ENCODE measurements at regions of chr1 and their contacts with region 1.

Region 1: DNA sequence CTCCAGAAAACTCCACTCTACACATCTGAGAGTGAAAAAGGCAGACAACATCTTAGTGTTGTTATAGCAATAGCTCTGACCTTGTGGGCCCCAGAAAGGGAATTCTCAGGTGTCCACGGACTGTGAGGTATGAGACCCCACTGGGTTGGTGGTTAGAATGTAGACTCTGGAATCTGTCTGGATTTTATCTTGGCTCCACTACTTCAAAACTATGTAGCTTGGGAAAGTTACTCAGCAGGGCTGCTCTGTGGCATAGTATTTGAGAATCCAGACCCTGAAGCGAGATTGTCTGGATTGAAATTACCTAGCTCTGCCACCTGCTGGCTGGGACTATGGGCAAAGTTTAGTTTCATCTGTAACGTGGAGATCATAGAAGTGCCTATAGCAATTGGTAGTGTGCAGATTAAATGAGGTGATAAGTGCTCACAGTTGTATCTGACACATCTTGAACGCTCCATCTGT is 25.8 kb downstream of the PRDM2 start:
- DNase-seq: peak; percentile 59
- H3K4me3 Mint-ChIP-seq: no peak overlapping the region
- H3K27ac Mint-ChIP-seq: no peak overlapping the region
- H3K4me1 Mint-ChIP-seq: peaks cover 35% of the 10 kb centered on the region
- H3K27me3 Mint-ChIP-seq: no peaks in the 10 kb centered on the region

Region 2: DNA sequence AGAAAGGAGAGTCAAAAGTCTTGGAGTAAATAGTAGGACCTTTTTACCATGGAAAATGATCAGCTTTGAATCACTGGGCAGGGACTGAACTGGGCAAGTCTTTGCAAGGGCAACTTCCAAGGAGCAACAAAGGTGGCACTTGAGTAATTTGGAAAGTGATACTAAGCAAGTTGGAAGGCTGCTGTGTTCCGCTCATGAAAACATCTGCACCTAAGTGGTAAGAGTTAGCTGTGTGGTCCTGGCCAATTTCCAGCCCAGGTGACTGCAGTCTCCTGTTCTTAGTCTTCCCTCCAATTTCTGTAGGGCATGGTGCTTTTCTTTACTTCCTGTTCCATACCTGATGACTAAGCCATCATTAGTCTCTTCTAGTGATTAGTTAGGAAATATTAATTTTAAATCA is 61.3 kb before region 1 on chr1:
- CTCF ChIA-PET with region 1: interaction called, 20 read pairs
- POLR2A ChIA-PET with region 1: no interaction called
- DNase-seq: no peak
- H3K4me3 Mint-ChIP-seq: no peak overlapping the region
- H3K27ac Mint-ChIP-seq: no peak overlapping the region
- H3K4me1 Mint-ChIP-seq: peaks cover 2% of the 10 kb centered on the region
- H3K27me3 Mint-ChIP-seq: peaks cover 2% of the 10 kb centered on the region

Region 3: DNA sequence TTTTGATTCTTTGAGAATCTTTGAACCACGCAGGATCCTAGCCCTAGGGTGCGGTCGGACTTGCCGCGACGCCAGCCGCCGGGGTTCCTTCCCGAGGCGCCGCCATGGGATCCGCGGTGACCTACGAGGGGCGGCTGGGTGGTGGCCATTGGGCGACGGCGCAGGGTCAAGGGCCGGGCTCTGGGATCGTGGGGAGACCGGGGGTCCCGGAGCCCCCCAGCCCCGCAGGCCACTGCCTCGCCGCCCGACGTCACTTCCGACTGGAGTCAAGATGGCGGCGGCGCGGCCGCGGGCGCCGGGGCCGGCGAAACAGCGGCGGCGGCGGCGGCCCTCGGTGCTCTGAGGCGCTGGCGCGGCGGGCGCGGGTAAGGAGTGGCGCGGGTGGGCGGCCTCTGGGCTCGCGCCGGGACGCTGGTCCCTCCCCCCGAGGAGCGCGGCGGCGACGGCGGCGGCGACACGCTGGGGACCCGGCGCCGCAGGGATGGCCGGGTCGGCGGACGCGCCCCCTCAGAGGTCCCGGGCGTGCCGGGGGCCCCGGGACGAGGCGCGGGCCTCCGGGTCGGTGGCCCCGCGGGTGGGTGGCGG is 25.7 kb before region 1 on chr1 and contains the start of gene PRDM2:
- CTCF ChIA-PET with region 1: interaction called, 24 read pairs
- POLR2A ChIA-PET with region 1: interaction called, 59 read pairs
- DNase-seq: peak; percentile 64
- H3K4me3 Mint-ChIP-seq: peak within 1 kb of the TSS; percentile 94
- H3K27ac Mint-ChIP-seq: peak within 1 kb of the TSS; percentile 95
- H3K4me1 Mint-ChIP-seq: peaks cover 44% of the 10 kb centered on the region
- H3K27me3 Mint-ChIP-seq: peaks cover 2% of the 10 kb centered on the region
- total RNA-seq, gene PRDM2: 56.3 to 58.4 TPM

Region 4: DNA sequence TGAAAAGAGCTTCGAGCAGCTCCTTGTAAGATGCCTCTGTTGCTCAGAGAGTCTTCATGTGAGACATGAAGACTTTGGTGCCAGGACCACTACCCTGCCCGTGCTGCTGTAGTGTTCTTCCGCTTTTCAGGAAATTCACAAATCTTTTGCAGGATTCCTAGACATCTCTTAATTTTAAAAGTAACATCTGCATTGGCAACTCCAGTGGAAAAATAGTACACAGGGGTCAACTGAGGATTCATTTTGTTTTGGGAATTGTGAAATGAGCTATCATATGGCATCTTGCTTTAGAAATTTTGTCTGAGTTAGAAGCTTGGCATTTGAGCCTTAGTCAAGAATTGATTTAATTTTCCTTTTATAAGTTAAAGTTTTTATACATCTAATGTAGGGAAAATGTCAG is 18.6 kb before region 1 on chr1:
- CTCF ChIA-PET with region 1: interaction called, 24 read pairs
- POLR2A ChIA-PET with region 1: interaction called, 59 read pairs
- DNase-seq: no peak
- H3K4me3 Mint-ChIP-seq: no peak overlapping the region
- H3K27ac Mint-ChIP-seq: no peak overlapping the region
- H3K4me1 Mint-ChIP-seq: peaks cover 39% of the 10 kb centered on the region
- H3K27me3 Mint-ChIP-seq: no peaks in the 10 kb centered on the region

Region 5: GRCh38 chr1:13748610-13749505 is 23.1 kb after region 1 on chr1:
- CTCF ChIA-PET with region 1: interaction called, 47 read pairs
- POLR2A ChIA-PET with region 1: interaction called, 177 read pairs
- DNase-seq: peak; percentile 96
- H3K4me3 Mint-ChIP-seq: peak overlapping the region; percentile 86
- H3K27ac Mint-ChIP-seq: peak overlapping the region; percentile 87
- H3K4me1 Mint-ChIP-seq: peaks cover 48% of the 10 kb centered on the region
- H3K27me3 Mint-ChIP-seq: no peaks in the 10 kb centered on the region

Measured in activated CD4-positive, alpha-beta memory T cell treated with anti-CD3 and anti-CD28 coated beads, Interleukin-2, amount 10 ng/mL, durations not matched to agents 7 days and 5 days (primary cell).